HEK293 (cell line): ENCODE measurements at regions of chr13 and their contacts with region 1.

Region 1: GRCh38 chr13:99845161-99845874 is 126.2 kb downstream of the ZIC5 start:
- H3K4me3 ChIP-seq: no peak overlapping the region
- H3K27ac ChIP-seq: no peak overlapping the region
- H3K4me1 ChIP-seq: no peaks in the 10 kb centered on the region
- CTCF ChIP-seq: no peak

Region 2: GRCh38 chr13:99516153-99516929 is 329.0 kb before region 1 on chr13:
- CTCF ChIA-PET with region 1: no interaction called
- POLR2A ChIA-PET with region 1: no interaction called
- H3K4me3 ChIP-seq: no peak overlapping the region
- H3K27ac ChIP-seq: no peak overlapping the region
- H3K4me1 ChIP-seq: no peaks in the 10 kb centered on the region
- CTCF ChIP-seq: no peak

Region 3: GRCh38 chr13:99987154-99988019 is 142.1 kb after region 1 on chr13:
- CTCF ChIA-PET with region 1: no interaction called
- POLR2A ChIA-PET with region 1: interaction called, 12 read pairs
- H3K4me3 ChIP-seq: no peak overlapping the region
- H3K27ac ChIP-seq: no peak overlapping the region
- H3K4me1 ChIP-seq: peaks cover 1% of the 10 kb centered on the region; the same call in 1 of the 2 replicates
- CTCF ChIP-seq: no peak

Region 4: DNA sequence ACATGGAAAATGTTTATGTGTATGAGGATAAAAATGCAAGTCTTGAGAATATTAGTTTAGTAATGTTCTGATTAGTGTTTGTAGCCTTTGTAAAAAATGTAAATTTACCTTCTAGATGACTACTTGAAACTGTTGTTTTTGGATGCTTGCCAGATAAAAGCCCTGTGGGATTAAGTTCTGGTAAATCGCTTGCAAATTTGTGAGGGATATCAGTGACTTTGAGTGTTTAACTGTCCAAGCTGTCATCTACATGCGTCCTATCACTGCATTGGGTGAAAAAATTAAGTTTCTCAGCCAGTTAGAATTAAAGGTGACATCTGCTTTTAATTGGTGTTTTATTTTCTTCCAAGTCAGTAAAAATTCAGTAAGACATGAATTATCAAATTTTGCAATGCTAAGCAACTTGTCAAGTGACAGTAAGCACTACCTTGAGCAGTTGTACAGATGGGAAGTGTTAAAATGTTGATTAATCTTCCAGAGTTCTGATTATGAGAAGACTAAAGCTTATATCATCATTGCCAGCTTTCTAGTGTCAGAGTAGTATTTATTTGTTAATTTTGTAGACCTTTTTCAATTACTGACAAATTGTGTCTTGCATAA is 331.6 kb after region 1 on chr13:
- CTCF ChIA-PET with region 1: no interaction called
- POLR2A ChIA-PET with region 1: no interaction called
- H3K4me3 ChIP-seq: no peak overlapping the region
- H3K27ac ChIP-seq: no peak overlapping the region
- H3K4me1 ChIP-seq: peaks cover 3% of the 10 kb centered on the region
- CTCF ChIP-seq: no peak